Transverse colon (tissue), 4 donors: ENCODE measurements at regions of chr12 and their contacts with region 1.

Region 1: DNA sequence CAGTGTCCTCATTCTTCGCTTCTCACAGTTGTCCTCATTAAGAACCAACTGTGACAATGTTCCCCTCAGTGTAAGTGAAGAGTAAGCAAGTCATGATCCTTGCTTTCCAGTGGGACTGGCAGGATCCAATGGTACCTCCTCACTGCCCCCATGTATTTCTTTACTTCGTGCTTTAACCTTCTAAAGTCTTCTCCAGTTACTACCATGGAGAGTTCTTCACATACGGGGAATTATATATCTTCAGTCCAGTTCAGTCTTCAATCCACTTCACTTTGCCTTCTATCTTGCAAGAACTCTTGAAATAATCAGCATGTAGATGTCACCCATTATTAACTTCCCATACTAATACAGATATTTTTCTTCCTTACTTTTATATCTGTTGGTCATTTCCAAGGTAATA is 381.9 kb upstream of the GARIN6 start:
- DNase-seq: no peak
- H3K4me3 ChIP-seq: no peak overlapping the region
- H3K27ac ChIP-seq: no peak overlapping the region
- H3K4me1 ChIP-seq: no peaks in the 10 kb centered on the region
- H3K27me3 ChIP-seq: no peaks in the 10 kb centered on the region
- CTCF ChIP-seq: no peak
- EP300 ChIP-seq: no peak
- POLR2A ChIP-seq: no peak

Region 2: GRCh38 chr12:99281277-99281676 is 15.6 kb after region 1 on chr12:
- in situ Hi-C with region 1: no loop called
- intact Hi-C with region 1: loop called (anchors 1 kb)
- DNase-seq: no peak
- H3K4me3 ChIP-seq: no peak overlapping the region
- H3K27ac ChIP-seq: no peak overlapping the region
- H3K4me1 ChIP-seq: no peaks in the 10 kb centered on the region
- H3K27me3 ChIP-seq: no peaks in the 10 kb centered on the region
- CTCF ChIP-seq: no peak
- EP300 ChIP-seq: no peak
- POLR2A ChIP-seq: no peak